Activated CD8-positive, alpha-beta T cell treated with anti-CD3 and anti-CD28 coated beads for 36 hours (primary cell): ENCODE measurements at regions of chrX and their contacts with region 1.

Region 1: GRCh38 chrX:136028251-136028984 is 43.2 kb downstream of the SLC9A6 start:
- DNase-seq: no peak
- ATAC-seq: peak; percentile 61
- H3K4me3 Mint-ChIP-seq: no peak overlapping the region
- H3K27ac Mint-ChIP-seq: no peak overlapping the region
- H3K4me1 Mint-ChIP-seq: no peaks in the 10 kb centered on the region
- H3K27me3 Mint-ChIP-seq: no peaks in the 10 kb centered on the region
- CTCF ChIP-seq: peak; percentile 40

Region 2: GRCh38 chrX:136015016-136015415 is 13.4 kb before region 1 on chrX:
- CTCF ChIA-PET with region 1: interaction called, 12 read pairs
- POLR2A ChIA-PET with region 1: interaction called, 4 read pairs
- intact Hi-C with region 1: no loop called
- DNase-seq: no peak
- ATAC-seq: no peak
- H3K4me3 Mint-ChIP-seq: no peak overlapping the region
- H3K27ac Mint-ChIP-seq: no peak overlapping the region
- H3K4me1 Mint-ChIP-seq: no peaks in the 10 kb centered on the region
- H3K27me3 Mint-ChIP-seq: no peaks in the 10 kb centered on the region
- CTCF ChIP-seq: no peak

Region 3: GRCh38 chrX:136147315-136147901 is 119.0 kb after region 1 on chrX and contains the start of gene FHL1:
- CTCF ChIA-PET with region 1: interaction called, 12 read pairs
- POLR2A ChIA-PET with region 1: no interaction called
- intact Hi-C with region 1: no loop called
- DNase-seq: peak; percentile 55
- ATAC-seq: peak; percentile 65
- H3K4me3 Mint-ChIP-seq: peak within 1 kb of the TSS; percentile 77
- H3K27ac Mint-ChIP-seq: peak within 1 kb of the TSS; percentile 80
- H3K4me1 Mint-ChIP-seq: peaks cover 27% of the 10 kb centered on the region
- H3K27me3 Mint-ChIP-seq: peaks cover 4% of the 10 kb centered on the region
- CTCF ChIP-seq: no peak
- total RNA-seq, gene FHL1: 17.9 to 18.4 TPM

Region 4: DNA sequence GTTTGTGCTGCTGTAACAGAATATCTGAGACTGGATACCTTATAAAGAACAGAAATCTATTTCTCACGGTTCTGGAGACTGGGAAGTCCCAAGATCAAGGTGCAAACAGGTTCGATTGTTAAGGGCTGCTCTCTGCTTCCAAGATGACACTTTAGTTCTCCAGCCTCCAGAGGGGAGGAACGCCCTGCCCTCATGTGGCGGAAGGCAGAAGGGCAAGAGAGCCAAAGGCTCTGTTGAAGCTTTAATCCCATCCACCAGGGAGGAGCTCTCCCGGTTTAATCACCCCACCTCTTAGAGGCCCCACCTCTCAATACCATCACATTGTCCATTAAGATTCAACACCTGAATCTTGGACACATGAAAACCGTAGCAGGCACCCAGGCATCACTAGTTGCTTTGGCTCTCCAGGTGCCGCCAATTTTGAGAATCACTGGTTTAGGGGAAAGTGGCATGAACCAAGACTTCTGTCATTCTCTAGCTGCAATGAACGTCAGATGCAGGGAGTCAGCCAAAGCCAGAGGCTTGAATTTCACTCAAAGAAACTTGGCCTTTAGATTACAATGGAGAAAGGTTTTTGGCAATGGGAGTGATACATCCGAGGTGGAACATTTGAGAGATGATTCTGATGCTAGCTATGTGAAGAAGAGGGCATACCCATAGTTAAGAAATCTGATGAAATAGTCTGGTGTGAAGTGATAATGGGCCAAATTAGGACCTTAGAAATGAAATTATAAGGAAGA is 134.6 kb after region 1 on chrX:
- CTCF ChIA-PET with region 1: interaction called, 77 read pairs
- POLR2A ChIA-PET with region 1: no interaction called
- intact Hi-C with region 1: loop called (anchors 1 kb)
- DNase-seq: peak; percentile 63
- ATAC-seq: peak; percentile 79
- H3K4me3 Mint-ChIP-seq: no peak overlapping the region
- H3K27ac Mint-ChIP-seq: no peak overlapping the region
- H3K4me1 Mint-ChIP-seq: no peaks in the 10 kb centered on the region
- H3K27me3 Mint-ChIP-seq: no peaks in the 10 kb centered on the region
- CTCF ChIP-seq: peak; percentile 59

Region 5: DNA sequence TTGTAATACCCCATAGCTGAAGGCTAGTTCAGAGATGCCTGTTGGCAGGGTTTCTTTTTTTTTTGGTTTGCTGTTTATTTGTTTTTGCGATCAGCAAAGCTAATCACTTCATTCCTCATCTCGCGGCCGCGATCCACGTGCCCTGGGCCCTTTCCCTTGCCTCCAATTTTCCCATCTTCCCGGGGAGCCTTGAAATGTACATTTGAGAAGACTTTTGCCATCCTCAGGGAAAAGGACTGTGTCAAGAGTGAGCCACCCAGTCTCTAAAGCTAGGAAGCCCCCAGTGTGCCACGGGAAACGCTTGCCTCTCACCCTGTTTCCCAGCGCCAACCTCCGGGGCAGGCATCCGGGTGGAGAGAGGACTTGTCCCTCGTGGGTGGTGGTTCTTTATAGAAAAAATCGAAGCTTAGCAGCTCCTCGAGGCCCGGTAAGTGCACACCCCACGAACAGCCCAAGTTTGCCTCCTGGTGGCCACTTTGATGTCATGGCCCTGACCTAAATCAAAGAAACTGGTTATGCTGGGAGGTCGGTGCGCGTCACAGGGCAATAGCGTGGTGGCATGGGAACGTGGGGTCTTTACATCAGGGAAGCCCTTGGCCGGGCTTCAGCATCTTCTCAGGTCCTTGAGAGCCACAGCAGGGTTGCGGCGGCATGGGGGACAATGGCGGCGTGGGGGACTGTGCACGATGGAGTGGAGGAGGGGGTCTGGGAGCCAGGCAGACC is 180.8 kb after region 1 on chrX:
- CTCF ChIA-PET with region 1: interaction called, 15 read pairs
- POLR2A ChIA-PET with region 1: no interaction called
- intact Hi-C with region 1: loop called (anchors 10 kb)
- DNase-seq: peak; percentile 41
- ATAC-seq: no peak
- H3K4me3 Mint-ChIP-seq: no peak overlapping the region
- H3K27ac Mint-ChIP-seq: no peak overlapping the region
- H3K4me1 Mint-ChIP-seq: peaks cover 10% of the 10 kb centered on the region
- H3K27me3 Mint-ChIP-seq: no peaks in the 10 kb centered on the region
- CTCF ChIP-seq: no peak

Region 6: GRCh38 chrX:136214551-136214950 is 186.1 kb after region 1 on chrX:
- CTCF ChIA-PET with region 1: interaction called, 15 read pairs
- POLR2A ChIA-PET with region 1: no interaction called
- intact Hi-C with region 1: loop called (anchors 10 kb)
- DNase-seq: no peak
- ATAC-seq: no peak
- H3K4me3 Mint-ChIP-seq: no peak overlapping the region
- H3K27ac Mint-ChIP-seq: no peak overlapping the region
- H3K4me1 Mint-ChIP-seq: peaks cover 4% of the 10 kb centered on the region
- H3K27me3 Mint-ChIP-seq: no peaks in the 10 kb centered on the region
- CTCF ChIP-seq: no peak

Region 7: GRCh38 chrX:136268051-136269048 is 239.9 kb after region 1 on chrX:
- CTCF ChIA-PET with region 1: interaction called, 26 read pairs
- POLR2A ChIA-PET with region 1: no interaction called
- intact Hi-C with region 1: loop called (anchors 5 kb)
- DNase-seq: peak; percentile 64
- ATAC-seq: peak; percentile 61
- H3K4me3 Mint-ChIP-seq: no peak overlapping the region
- H3K27ac Mint-ChIP-seq: no peak overlapping the region
- H3K4me1 Mint-ChIP-seq: peaks cover 3% of the 10 kb centered on the region
- H3K27me3 Mint-ChIP-seq: no peaks in the 10 kb centered on the region
- CTCF ChIP-seq: peak; percentile 71